ENCODE measurements at regions of chrX and their contacts with region 1.

Region 1: GRCh38 chrX:1453951-1454785 is 1.5 kb upstream of the ASMTL start:
- DNase-seq: peak; percentile 82 to 94 (median 89)
- ATAC-seq: peak; percentile 26
- H3K4me3 ChIP-seq: no peak overlapping the region
- H3K4me3 Mint-ChIP-seq: peak overlapping the region; percentile 49 to 93 (median 68)
- H3K27ac ChIP-seq: peak overlapping the region; percentile 99
- H3K27ac Mint-ChIP-seq: peak overlapping the region in 8 of 9 donors; percentile 68 to 90 (median 80)
- H3K4me1 ChIP-seq: peaks cover 24 to 41% of the 10 kb centered on the region in 2 donors
- H3K4me1 Mint-ChIP-seq: peaks cover 3 to 29% (median 24%) of the 10 kb centered on the region in 7 donors
- H3K27me3 ChIP-seq: no peaks in the 10 kb centered on the region
- H3K27me3 Mint-ChIP-seq: peaks cover 0 to 2% (median 0%) of the 10 kb centered on the region in 5 donors

Region 2: GRCh38 chrX:318739-319578 is 1135.2 kb before region 1 on chrX and contains the start of gene GTPBP6:
- CTCF ChIA-PET with region 1: no interaction called
- POLR2A ChIA-PET with region 1: no interaction called
- intact Hi-C with region 1: loop called (anchors 1 kb)
- DNase-seq: peak; percentile 93 to 100 (median 99)
- ATAC-seq: peak; percentile 80
- H3K4me3 ChIP-seq: peak within 1 kb of the TSS; percentile 70
- H3K4me3 Mint-ChIP-seq: peak within 1 kb of the TSS in 9 of 10 donors; percentile 85 to 98 (median 92)
- H3K27ac ChIP-seq: peak within 1 kb of the TSS; percentile 95
- H3K27ac Mint-ChIP-seq: peak within 1 kb of the TSS; percentile 93 to 100 (median 98)
- H3K4me1 ChIP-seq: peaks cover 15 to 16% of the 10 kb centered on the region in 2 donors
- H3K4me1 Mint-ChIP-seq: peaks cover 8 to 34% (median 25%) of the 10 kb centered on the region in 7 donors
- H3K27me3 ChIP-seq: no peaks in the 10 kb centered on the region
- H3K27me3 Mint-ChIP-seq: peaks cover 0 to 3% (median 0%) of the 10 kb centered on the region in 5 donors
- total RNA-seq, gene GTPBP6: 52.1 to 95.2 (median 75.1) TPM

Region 3: DNA sequence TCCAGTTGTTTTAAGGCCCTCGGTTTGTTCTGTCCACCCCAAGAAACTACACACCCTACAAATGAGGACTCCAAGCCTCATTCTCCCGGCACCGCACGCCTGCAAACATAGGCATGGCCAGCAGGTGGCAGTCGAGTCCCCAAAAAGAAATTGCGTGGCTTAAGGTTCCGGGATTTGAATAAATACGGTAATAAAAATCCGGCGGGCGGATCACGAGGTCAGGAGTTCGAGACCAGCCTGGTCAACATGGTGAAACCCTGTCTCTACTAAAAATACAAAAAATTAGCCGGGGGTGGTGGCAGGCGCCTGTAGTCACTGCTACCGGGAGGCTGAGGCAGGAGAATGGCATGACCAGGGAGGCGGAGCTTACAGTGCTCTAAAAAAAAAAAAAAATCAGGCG is 207.4 kb before region 1 on chrX:
- CTCF ChIA-PET with region 1: no interaction called
- POLR2A ChIA-PET with region 1: no interaction called
- intact Hi-C with region 1: loop called (anchors 1 to 2 kb)
- DNase-seq: peak; percentile 55 to 88 (median 77)
- ATAC-seq: peak; percentile 81
- H3K4me3 ChIP-seq: no peak overlapping the region
- H3K4me3 Mint-ChIP-seq: peak overlapping the region in 9 of 10 donors; percentile 4 to 72 (median 63)
- H3K27ac ChIP-seq: no peak overlapping the region
- H3K27ac Mint-ChIP-seq: peak overlapping the region; percentile 44 to 84 (median 80)
- H3K4me1 ChIP-seq: peaks cover 6 to 18% of the 10 kb centered on the region in 2 donors
- H3K4me1 Mint-ChIP-seq: peaks cover 6 to 45% (median 38%) of the 10 kb centered on the region in 7 donors
- H3K27me3 ChIP-seq: no peaks in the 10 kb centered on the region
- H3K27me3 Mint-ChIP-seq: peaks cover 0 to 2% (median 0%) of the 10 kb centered on the region in 5 donors

Region 4: GRCh38 chrX:1481636-1482529 is 27.7 kb after region 1 on chrX:
- CTCF ChIA-PET with region 1: no interaction called
- POLR2A ChIA-PET with region 1: no interaction called
- intact Hi-C with region 1: loop called (anchors 1 to 2 kb)
- DNase-seq: peak; percentile 40 to 86 (median 79)
- ATAC-seq: peak; percentile 88
- H3K4me3 ChIP-seq: peak overlapping the region; percentile 29
- H3K4me3 Mint-ChIP-seq: peak overlapping the region; percentile 76 to 92 (median 83)
- H3K27ac ChIP-seq: peak overlapping the region; percentile 76
- H3K27ac Mint-ChIP-seq: peak overlapping the region; percentile 90 to 99 (median 97)
- H3K4me1 ChIP-seq: peaks cover 28 to 56% of the 10 kb centered on the region in 2 donors
- H3K4me1 Mint-ChIP-seq: peaks cover 50 to 74% (median 69%) of the 10 kb centered on the region in 7 donors
- H3K27me3 ChIP-seq: no peaks in the 10 kb centered on the region
- H3K27me3 Mint-ChIP-seq: no peaks in the 10 kb centered on the region

Region 5: DNA sequence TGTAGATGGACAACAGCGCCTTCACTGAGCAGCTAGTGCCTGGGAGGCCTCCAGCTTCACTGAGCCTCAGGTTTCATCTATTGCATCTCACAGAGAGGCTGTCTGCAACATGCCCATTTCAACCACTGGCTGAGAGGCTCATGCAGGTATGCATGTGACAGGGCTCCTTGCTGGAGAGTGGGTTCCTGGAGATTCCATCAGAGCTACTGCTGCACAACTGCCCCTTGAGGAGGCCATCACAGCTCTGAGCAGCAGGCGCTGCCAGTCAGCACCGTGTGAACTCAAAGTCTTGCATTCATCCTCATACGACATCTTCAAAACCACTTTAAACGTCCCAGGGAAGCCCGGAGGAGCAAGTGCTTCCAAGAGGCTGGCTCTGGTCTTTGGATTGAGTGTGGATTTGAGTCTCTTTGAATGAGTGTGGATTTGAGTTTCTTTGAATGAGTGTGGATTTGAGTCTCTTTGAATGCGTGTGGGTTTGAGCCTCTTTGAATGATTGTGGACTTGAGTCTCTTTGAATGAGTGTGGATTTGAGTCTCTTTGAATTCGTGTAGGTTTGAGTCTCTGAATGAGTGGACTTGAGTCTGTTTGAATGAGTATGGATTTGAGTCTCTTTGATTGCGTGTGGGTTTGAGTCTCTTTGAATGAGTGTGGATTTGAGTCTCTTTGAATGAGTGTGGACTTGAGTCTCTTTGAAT is 74.2 kb after region 1 on chrX:
- CTCF ChIA-PET with region 1: no interaction called
- POLR2A ChIA-PET with region 1: no interaction called
- intact Hi-C with region 1: no loop called
- DNase-seq: peak in 1 of 9 donors; percentile 33
- ATAC-seq: no peak
- H3K4me3 ChIP-seq: no peak overlapping the region
- H3K4me3 Mint-ChIP-seq: no peak overlapping the region
- H3K27ac ChIP-seq: no peak overlapping the region
- H3K27ac Mint-ChIP-seq: no peak overlapping the region
- H3K4me1 ChIP-seq: peaks cover 27 to 45% of the 10 kb centered on the region in 2 donors
- H3K4me1 Mint-ChIP-seq: peaks cover 5 to 12% (median 7%) of the 10 kb centered on the region in 7 donors
- H3K27me3 ChIP-seq: no peaks in the 10 kb centered on the region
- H3K27me3 Mint-ChIP-seq: no peaks in the 10 kb centered on the region

Region 6: DNA sequence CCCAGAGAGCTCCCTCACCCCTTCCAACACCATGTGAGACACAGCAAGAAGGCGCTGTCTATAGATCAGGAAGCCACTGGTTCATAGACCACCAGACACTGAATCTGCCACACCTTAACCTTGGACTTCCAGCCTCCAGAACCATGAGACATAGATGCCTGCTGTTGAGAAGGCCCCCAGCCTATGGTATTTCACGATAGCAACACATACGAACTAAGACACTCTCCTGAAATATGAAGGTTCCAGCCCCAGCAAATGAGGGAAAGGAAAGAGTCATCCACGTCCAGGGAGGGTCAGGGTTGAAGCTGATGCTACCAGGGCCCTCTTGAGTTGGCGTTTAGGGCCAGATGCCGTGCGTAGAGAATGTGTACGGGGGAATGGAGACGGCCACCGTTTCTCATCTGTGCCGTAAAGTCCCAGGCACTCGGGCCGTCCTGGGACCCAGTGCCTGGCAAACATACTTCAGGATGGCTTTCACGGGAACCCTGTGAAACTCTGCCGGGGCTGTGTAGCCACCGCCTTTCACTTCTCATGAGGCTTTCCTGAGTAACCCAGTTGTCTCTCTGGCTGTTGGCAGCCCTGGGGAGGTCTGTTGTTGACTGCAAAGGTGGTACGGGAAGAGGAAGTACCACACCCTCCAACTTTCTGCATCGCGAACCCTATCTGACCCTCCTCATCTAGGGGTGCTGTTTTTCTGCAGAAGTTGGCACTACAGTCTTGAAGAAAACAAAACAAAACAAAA is 100.5 kb after region 1 on chrX:
- CTCF ChIA-PET with region 1: no interaction called
- POLR2A ChIA-PET with region 1: no interaction called
- intact Hi-C with region 1: loop called in 1 of 2 experiments (anchors 1 kb)
- DNase-seq: peak in 8 of 9 donors; percentile 28 to 92 (median 83)
- ATAC-seq: peak; percentile 97
- H3K4me3 ChIP-seq: peak overlapping the region; percentile 22
- H3K4me3 Mint-ChIP-seq: peak overlapping the region; percentile 55 to 81 (median 72)
- H3K27ac ChIP-seq: peak overlapping the region; percentile 72
- H3K27ac Mint-ChIP-seq: peak overlapping the region; percentile 91 to 100 (median 98)
- H3K4me1 ChIP-seq: peaks cover 47 to 55% of the 10 kb centered on the region in 2 donors
- H3K4me1 Mint-ChIP-seq: peaks cover 35 to 85% (median 56%) of the 10 kb centered on the region in 7 donors
- H3K27me3 ChIP-seq: no peaks in the 10 kb centered on the region
- H3K27me3 Mint-ChIP-seq: peaks cover 0 to 11% (median 0%) of the 10 kb centered on the region in 5 donors

Region 7: DNA sequence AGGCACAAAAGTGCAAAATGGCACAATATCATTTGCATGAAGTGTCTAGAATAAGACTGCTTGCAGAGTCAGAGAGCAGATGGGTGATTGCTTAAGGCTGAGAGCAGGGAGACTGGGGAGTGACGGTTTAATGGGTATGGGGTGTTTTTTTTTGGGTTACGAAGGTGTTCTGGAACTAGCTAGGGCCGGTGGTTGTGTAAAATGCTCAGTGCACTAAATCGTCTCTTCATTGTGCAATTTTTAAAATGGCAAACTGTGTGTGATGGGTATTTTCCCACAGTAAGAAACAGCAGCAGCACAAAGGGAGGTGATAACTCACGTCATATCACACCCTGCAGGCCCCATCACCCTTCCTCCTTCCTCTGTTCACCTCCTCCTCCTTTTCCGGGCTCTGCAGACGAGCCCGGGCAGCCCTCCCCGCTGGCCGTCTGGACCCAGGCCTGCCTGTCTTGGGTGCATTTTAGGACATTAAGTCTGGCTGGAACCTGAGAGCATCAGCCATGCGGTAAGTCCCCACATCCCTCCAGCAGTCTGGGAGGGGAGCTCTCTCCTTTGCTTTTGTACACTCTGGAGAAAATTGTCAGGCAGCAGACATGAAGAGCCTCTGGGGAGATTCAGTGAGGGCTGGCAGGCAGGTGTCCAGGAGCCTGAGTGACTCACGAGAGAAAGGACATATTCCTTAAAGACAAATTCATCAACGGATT is 203.4 kb after region 1 on chrX:
- CTCF ChIA-PET with region 1: no interaction called
- POLR2A ChIA-PET with region 1: no interaction called
- intact Hi-C with region 1: loop called (anchors 1 kb)
- DNase-seq: peak in 8 of 9 donors; percentile 18 to 73 (median 60)
- ATAC-seq: peak; percentile 69
- H3K4me3 ChIP-seq: peak overlapping the region; percentile 69
- H3K4me3 Mint-ChIP-seq: peak overlapping the region; percentile 77 to 99 (median 92)
- H3K27ac ChIP-seq: peak overlapping the region; percentile 80
- H3K27ac Mint-ChIP-seq: peak overlapping the region; percentile 90 to 99 (median 94)
- H3K4me1 ChIP-seq: peaks cover 21 to 24% of the 10 kb centered on the region in 2 donors
- H3K4me1 Mint-ChIP-seq: peaks cover 17 to 40% (median 36%) of the 10 kb centered on the region in 7 donors
- H3K27me3 ChIP-seq: no peaks in the 10 kb centered on the region
- H3K27me3 Mint-ChIP-seq: no peaks in the 10 kb centered on the region

Region 8: GRCh38 chrX:1894740-1895139 is 440.6 kb after region 1 on chrX:
- CTCF ChIA-PET with region 1: no interaction called
- POLR2A ChIA-PET with region 1: no interaction called
- intact Hi-C with region 1: no loop called
- DNase-seq: no peak
- ATAC-seq: no peak
- H3K4me3 ChIP-seq: no peak overlapping the region
- H3K4me3 Mint-ChIP-seq: no peak overlapping the region
- H3K27ac ChIP-seq: no peak overlapping the region
- H3K27ac Mint-ChIP-seq: no peak overlapping the region
- H3K4me1 ChIP-seq: no peaks in the 10 kb centered on the region
- H3K4me1 Mint-ChIP-seq: no peaks in the 10 kb centered on the region
- H3K27me3 ChIP-seq: no peaks in the 10 kb centered on the region
- H3K27me3 Mint-ChIP-seq: peaks cover 0 to 23% (median 5%) of the 10 kb centered on the region in 5 donors

Region 9: GRCh38 chrX:2608638-2609430 is 1154.7 kb after region 1 on chrX:
- CTCF ChIA-PET with region 1: no interaction called
- POLR2A ChIA-PET with region 1: no interaction called
- intact Hi-C with region 1: loop called (anchors 1 kb)
- DNase-seq: peak; percentile 69 to 89 (median 79)
- ATAC-seq: peak; percentile 99
- H3K4me3 ChIP-seq: peak overlapping the region; percentile 89
- H3K4me3 Mint-ChIP-seq: peak overlapping the region; percentile 90 to 96 (median 93)
- H3K27ac ChIP-seq: peak overlapping the region; percentile 71
- H3K27ac Mint-ChIP-seq: peak overlapping the region; percentile 51 to 93 (median 86)
- H3K4me1 ChIP-seq: peaks cover 9 to 17% of the 10 kb centered on the region in 2 donors
- H3K4me1 Mint-ChIP-seq: peaks cover 39 to 72% (median 56%) of the 10 kb centered on the region in 7 donors
- H3K27me3 ChIP-seq: no peaks in the 10 kb centered on the region
- H3K27me3 Mint-ChIP-seq: no peaks in the 10 kb centered on the region

Measured in naive thymus-derived CD4-positive, alpha-beta T cell (primary cell).